Activated B cell treated with CpG ODN at 0.5 μM for 24 hours (primary cell): ENCODE measurements at regions of chr6 and their contacts with region 1.

Region 1: DNA sequence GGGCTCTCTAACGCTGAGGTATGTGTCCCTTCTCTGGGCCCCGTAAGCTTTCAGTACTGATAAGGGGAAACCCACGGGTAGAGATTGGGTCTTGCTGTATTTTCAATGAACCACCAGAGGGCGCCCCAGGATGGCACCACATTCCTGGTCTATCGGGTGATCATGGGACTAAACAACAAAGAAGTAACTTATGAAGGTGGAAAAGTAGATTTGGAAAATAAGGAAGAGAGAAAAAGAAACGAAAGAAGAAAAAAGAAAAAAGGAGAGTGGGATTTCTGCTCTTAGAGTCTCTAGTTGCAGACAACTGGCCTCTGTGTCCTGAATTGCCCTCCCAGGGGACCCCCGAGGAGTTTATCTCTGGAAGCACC is 93.8 kb downstream of the GMPR start:
- DNase-seq: peak; percentile 62
- ATAC-seq: peak; percentile 96
- H3K4me3 Mint-ChIP-seq: no peak overlapping the region
- H3K27ac Mint-ChIP-seq: no peak overlapping the region
- H3K4me1 Mint-ChIP-seq: peaks cover 11% of the 10 kb centered on the region
- H3K27me3 Mint-ChIP-seq: no peaks in the 10 kb centered on the region
- CTCF ChIP-seq: peak; percentile 78

Region 2: DNA sequence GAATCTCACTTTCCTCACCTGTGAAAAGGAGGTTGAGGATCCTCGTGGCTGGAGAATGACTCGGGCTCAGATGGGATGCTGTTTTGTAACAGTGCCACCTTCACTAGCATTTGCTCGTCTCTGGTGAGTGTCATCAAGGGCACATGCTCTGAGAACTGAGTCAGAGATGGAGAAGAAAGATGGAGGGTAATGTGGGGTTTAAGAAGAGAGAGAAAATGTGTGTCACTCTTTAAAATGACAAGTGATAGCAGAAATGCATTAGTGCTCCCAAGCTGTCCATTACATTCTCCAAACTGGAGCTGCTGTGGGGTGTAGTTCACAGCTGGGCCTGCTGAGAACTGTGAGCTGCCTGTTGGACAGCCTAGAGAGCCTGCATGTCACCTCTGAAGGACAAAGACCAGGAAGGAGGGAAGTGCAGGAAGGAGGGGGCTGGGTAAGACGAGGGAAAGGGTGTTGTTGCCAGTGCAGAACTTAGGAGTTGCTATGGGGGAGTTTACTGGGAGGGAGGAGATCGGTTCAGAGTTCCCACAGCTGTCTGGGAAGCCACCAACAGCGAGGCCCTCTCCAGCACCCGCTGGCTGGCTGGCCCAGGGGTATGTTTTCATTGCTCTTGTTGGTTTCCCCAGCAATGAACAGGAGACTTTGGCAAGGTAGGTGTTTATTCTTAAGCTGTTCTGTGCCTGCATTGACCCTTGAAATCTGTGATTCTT is 74.0 kb before region 1 on chr6:
- CTCF ChIA-PET with region 1: no interaction called
- POLR2A ChIA-PET with region 1: no interaction called
- intact Hi-C with region 1: no loop called
- DNase-seq: no peak
- ATAC-seq: no peak
- H3K4me3 Mint-ChIP-seq: no peak overlapping the region
- H3K27ac Mint-ChIP-seq: no peak overlapping the region
- H3K4me1 Mint-ChIP-seq: no peaks in the 10 kb centered on the region
- H3K27me3 Mint-ChIP-seq: peaks cover 8% of the 10 kb centered on the region
- CTCF ChIP-seq: no peak

Region 3: GRCh38 chr6:16305246-16305725 is 26.9 kb before region 1 on chr6:
- CTCF ChIA-PET with region 1: no interaction called
- POLR2A ChIA-PET with region 1: no interaction called
- intact Hi-C with region 1: loop called (anchors 1 kb)
- DNase-seq: peak; percentile 37
- ATAC-seq: peak; percentile 96
- H3K4me3 Mint-ChIP-seq: peak overlapping the region; percentile 82
- H3K27ac Mint-ChIP-seq: peak overlapping the region; percentile 65
- H3K4me1 Mint-ChIP-seq: peaks cover 36% of the 10 kb centered on the region
- H3K27me3 Mint-ChIP-seq: no peaks in the 10 kb centered on the region
- CTCF ChIP-seq: no peak

Region 4: DNA sequence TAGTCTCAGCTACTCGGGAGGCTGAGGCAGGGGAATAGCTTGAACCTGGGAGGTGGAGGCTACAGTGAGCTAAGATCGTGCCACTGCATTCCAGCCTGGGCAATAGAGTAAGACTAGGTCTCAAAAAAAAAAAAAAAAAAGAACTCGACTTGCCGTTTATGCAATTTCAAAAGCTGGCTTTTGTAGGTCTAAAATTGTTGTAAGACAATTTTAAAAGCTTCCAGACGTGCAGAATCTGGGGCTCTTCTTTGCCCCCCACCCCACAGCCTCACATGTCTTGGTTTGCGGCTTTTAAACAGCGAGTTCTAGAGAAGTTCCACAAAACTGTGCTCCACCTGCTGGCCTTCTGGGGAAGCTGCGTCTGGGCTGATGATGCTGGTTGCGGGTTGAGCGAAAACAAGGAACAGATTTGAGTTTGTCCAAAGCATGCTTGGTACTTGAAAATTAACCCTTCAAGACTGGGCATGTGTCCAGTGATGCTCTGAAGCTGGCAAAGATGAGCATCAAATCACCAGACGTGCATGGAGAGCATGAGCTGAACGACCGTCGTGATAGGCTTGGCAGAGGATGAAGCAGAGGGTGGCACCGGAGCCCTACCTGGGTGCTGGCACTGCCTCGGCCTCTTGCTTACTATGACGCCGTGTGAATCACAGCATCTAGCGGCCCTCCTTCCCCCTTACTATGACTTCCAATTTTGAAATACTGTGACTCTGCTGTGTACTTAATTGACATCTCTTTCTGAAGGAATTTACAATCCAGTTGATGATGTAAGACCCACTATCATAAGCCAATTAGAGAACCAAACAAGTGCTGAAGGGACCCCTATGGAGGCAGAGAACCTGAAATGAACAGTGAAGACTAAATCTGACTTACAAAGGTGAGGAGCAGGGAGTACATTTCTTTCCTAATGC is 77.6 kb after region 1 on chr6:
- CTCF ChIA-PET with region 1: interaction called, 9 read pairs
- POLR2A ChIA-PET with region 1: interaction called, 3 read pairs
- intact Hi-C with region 1: loop called (anchors 1 kb)
- DNase-seq: peak; percentile 32
- ATAC-seq: peak; percentile 60
- H3K4me3 Mint-ChIP-seq: peak overlapping the region; percentile 63
- H3K27ac Mint-ChIP-seq: peak overlapping the region; percentile 37
- H3K4me1 Mint-ChIP-seq: peaks cover 66% of the 10 kb centered on the region
- H3K27me3 Mint-ChIP-seq: no peaks in the 10 kb centered on the region
- CTCF ChIP-seq: no peak

Region 5: DNA sequence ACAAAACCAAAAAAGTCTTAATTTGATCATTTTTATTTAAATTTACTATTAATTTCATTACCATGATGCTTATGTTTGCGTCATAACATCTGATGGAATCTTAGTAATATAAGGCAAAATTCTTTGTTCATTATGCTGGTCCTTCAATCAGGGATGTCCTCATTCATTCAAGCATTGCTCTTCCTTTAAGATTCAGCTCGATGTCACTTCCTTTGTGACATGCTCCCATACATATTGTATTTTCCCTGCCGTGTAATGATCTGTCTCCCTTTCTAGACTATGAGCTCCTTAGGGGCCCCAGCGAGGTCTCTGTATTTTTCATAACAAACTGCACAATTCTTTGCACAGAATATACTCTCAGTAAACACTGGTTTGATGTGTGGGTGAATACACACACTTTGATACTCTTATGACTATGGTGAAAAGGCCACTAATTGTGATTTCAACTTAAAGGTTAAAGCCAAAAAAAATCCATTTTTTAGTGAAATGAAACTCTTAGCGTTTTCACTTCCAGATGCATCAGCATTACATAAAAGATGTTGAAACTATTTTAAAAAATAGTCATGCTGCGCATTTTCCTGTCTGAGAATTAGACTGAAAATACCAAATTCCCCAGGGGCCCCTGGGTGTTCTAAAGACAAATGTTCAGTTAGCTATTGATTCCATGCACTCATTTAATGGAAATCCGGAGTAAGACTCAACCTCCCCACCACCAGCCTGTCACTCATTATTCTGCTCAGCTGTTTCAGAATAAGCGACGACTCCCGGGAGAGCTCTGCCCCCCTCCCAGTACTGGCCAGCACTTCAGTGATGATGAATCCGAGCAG is 259.4 kb after region 1 on chr6:
- CTCF ChIA-PET with region 1: interaction called, 3 read pairs
- POLR2A ChIA-PET with region 1: no interaction called
- intact Hi-C with region 1: loop called (anchors 1 kb)
- DNase-seq: no peak
- ATAC-seq: peak; percentile 75
- H3K4me3 Mint-ChIP-seq: peak overlapping the region; percentile 72
- H3K27ac Mint-ChIP-seq: peak overlapping the region; percentile 83
- H3K4me1 Mint-ChIP-seq: peaks cover 52% of the 10 kb centered on the region
- H3K27me3 Mint-ChIP-seq: no peaks in the 10 kb centered on the region
- CTCF ChIP-seq: no peak

Region 6: DNA sequence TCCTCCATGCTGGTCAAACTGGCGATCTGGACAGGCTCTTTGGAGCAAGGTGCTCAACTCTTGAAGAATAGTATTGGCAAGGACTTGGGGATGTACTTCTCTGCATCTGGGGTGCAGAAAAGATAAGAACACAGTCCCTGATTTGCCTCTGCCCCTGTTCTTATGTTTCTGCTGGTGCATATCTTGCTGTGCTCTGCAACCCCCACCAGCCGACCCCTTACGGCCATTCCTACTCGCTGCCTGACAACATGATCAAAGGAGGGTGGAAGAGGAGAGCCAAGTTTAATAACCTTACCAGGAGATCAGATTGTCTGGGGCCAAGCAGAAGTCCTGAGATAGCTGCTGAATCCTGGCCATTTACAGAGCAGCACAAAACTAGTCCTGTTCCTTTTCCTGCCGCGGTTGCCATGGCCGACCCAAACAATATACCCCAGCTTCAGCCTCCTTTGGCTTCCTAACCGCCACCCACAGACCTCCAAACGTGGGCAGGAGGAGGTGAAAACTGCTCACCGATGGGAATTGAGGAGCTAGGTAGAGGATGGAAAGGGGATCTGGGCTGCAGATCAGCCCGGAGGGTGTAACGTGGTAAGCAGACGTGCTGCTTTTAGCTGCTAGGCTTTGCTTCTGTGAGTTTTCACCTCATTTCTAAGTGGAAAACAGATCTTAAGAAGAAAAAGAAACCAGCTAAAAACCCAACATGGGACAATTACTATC is 368.2 kb after region 1 on chr6:
- CTCF ChIA-PET with region 1: no interaction called
- POLR2A ChIA-PET with region 1: no interaction called
- intact Hi-C with region 1: no loop called
- DNase-seq: no peak
- ATAC-seq: peak; percentile 36
- H3K4me3 Mint-ChIP-seq: peak overlapping the region; percentile 81
- H3K27ac Mint-ChIP-seq: peak overlapping the region; percentile 69
- H3K4me1 Mint-ChIP-seq: peaks cover 61% of the 10 kb centered on the region
- H3K27me3 Mint-ChIP-seq: peaks cover 8% of the 10 kb centered on the region
- CTCF ChIP-seq: no peak

Region 7: DNA sequence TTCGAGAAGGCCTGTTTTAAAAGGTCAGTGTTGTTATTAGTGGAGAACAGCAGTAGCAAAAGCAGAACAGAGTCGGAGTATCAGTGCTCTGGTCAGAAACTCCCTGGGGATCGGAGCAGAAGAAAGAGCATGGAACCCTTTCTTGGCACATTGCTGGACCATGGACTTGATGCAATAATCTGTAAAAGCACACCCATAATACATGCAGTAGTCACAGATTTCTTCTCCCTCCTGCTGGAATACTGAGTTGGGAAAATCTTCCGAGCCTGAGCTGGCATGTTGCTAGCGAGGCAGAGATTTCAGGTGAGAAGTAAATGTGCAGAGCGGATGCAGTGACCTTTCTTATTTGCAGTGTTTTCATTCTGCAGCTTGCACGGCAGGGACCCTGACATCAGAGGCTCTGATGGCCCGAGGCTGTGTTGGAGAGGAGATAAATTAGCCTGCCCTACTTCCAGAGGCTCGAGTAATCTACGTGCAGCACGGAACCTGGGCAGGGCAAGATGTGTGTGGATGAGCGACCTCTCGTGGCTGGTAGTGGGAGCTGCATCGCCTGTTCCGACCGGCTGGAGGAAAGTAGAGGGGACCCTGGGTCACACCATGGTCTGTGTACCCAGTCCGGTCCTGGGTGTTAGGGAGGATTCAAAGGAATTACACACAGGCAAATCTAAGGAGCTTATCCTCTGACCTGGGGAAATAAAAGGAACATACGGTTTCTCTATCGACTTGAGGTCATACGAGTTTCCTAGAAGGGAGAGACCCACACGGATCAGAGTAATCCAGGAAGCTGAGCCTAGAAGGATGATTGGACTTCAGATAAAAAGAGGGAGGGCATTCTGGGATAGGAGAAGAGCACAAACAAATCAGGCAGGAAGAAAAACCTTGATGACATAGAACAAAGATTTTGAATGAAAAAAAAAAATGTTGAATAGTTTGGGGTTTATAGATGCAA is 632.7 kb after region 1 on chr6:
- CTCF ChIA-PET with region 1: interaction called, 3 read pairs
- POLR2A ChIA-PET with region 1: no interaction called
- intact Hi-C with region 1: loop called (anchors 1 kb)
- DNase-seq: peak; percentile 15
- ATAC-seq: peak; percentile 54
- H3K4me3 Mint-ChIP-seq: no peak overlapping the region
- H3K27ac Mint-ChIP-seq: no peak overlapping the region
- H3K4me1 Mint-ChIP-seq: peaks cover 3% of the 10 kb centered on the region
- H3K27me3 Mint-ChIP-seq: peaks cover 12% of the 10 kb centered on the region
- CTCF ChIP-seq: no peak